ENCODE measurements at regions of chr20 and their contacts with region 1.

Region 1: GRCh38 chr20:3767427-3768341 is at the start of gene ADISSP:
- DNase-seq: peak; percentile 99 to 100 (median 100)
- H3K4me3 ChIP-seq: peak within 1 kb of the TSS; percentile 77
- H3K27ac ChIP-seq: peak within 1 kb of the TSS; percentile 85 to 92
- H3K4me1 ChIP-seq: peaks cover 15% of the 10 kb centered on the region
- H3K27me3 ChIP-seq: no peaks in the 10 kb centered on the region
- CTCF ChIP-seq: no peak
- EP300 ChIP-seq: no peak
- POLR2A ChIP-seq: peak; percentile 67
- total RNA-seq, gene ADISSP: 24.6 to 124 (median 69.1) TPM

Region 2: GRCh38 chr20:3679749-3680700 is 87.7 kb before region 1 on chr20:
- intact Hi-C with region 1: loop called in 2 of 4 experiments (anchors 5 to 10 kb)
- DNase-seq: peak; percentile 51 to 79 (median 76)
- H3K4me3 ChIP-seq: peak overlapping the region; percentile 62
- H3K27ac ChIP-seq: peak overlapping the region; percentile 63 to 76
- H3K4me1 ChIP-seq: peaks cover 16% of the 10 kb centered on the region
- H3K27me3 ChIP-seq: no peaks in the 10 kb centered on the region
- CTCF ChIP-seq: no peak
- EP300 ChIP-seq: no peak
- POLR2A ChIP-seq: no peak

Region 3: GRCh38 chr20:3686867-3687321 is 80.8 kb before region 1 on chr20:
- intact Hi-C with region 1: loop called in 1 of 4 experiments (anchors 10 kb)
- DNase-seq: peak; percentile 87 to 93 (median 90)
- H3K4me3 ChIP-seq: no peak overlapping the region
- H3K27ac ChIP-seq: peak overlapping the region in 1 of 2 donors; percentile 1
- H3K4me1 ChIP-seq: peaks cover 10% of the 10 kb centered on the region
- H3K27me3 ChIP-seq: no peaks in the 10 kb centered on the region
- CTCF ChIP-seq: no peak
- EP300 ChIP-seq: no peak
- POLR2A ChIP-seq: no peak

Region 4: DNA sequence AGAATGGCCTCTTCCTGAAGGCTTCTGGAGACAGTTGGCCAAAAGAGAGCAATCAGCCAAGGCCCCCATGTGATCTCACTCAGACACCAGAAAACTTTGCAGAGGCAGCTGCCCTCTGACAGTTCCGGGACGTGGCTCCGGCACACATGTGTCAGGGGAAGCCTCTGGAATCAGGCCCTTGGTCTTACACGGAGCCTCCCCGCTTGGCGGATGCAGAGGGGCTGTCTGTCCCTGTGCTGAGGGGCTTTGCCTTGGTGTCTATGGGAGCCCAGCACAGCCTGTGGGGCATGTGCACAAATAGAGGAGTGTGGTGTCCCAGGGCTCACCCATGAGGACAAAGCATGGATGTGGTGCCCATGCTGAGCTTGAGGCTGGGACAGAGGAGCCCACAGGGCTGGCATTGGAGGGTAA is 69.1 kb before region 1 on chr20:
- intact Hi-C with region 1: no loop called
- DNase-seq: no peak
- H3K4me3 ChIP-seq: no peak overlapping the region
- H3K27ac ChIP-seq: no peak overlapping the region
- H3K4me1 ChIP-seq: no peaks in the 10 kb centered on the region
- H3K27me3 ChIP-seq: no peaks in the 10 kb centered on the region
- CTCF ChIP-seq: no peak
- EP300 ChIP-seq: no peak
- POLR2A ChIP-seq: no peak

Measured in ovary (tissue), 10 donors.